PC-9 (cell line): ENCODE measurements at regions of chr15 and their contacts with region 1.

Region 1: DNA sequence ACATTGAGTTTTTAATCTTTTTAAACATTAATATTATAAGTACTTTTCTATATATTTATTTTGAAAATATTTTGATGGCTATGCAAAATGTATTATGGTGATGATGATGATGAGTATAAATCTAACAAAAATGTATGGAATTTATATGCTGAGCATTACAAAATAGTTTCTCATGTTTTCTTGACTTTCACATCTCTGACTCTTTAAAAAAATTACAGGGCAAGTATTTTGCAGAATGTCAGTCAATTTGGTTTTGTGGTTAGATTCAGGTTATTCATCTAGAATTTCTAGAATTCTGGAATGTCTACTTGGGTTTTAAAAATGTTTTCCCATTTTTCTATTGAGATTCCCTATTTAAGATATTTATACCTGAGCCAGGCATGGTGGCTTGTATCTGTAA is 41.7 kb upstream of the ANP32A start:
- DNase-seq: no peak
- H3K4me3 ChIP-seq: no peak overlapping the region
- H3K27ac ChIP-seq: no peak overlapping the region
- H3K4me1 ChIP-seq: no peaks in the 10 kb centered on the region
- H3K27me3 ChIP-seq: no peaks in the 10 kb centered on the region
- CTCF ChIP-seq: no peak

Region 2: DNA sequence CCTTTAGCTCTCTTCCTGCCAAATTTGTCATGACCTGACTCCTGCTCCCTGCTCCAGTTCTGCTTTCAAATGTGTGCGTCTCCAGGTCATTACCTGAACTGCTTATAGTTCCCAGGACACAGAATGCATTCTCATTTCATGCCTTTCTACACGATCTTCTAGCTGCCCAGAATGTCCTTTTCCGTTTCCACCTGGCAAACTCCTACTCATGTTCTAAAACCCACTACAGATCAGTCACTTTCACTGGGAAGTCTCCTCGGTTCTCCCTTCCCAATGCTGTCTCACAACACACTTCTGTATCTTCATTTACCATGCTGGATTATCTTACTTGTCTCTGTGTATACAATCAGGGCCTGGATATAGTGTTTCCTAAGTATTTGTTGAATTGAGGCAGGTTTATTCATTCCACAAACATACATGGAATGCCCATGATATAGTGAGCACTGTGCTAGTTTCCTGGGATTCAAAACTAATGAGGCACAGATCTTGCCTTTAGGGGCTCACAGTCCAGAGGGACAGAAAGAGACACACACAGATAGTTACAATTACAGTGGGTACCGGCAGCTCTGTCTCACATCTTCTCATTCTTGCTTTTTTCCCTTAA is 150.4 kb after region 1 on chr15:
- CTCF ChIA-PET with region 1: no interaction called
- POLR2A ChIA-PET with region 1: interaction called, 10 read pairs
- intact Hi-C with region 1: no loop called
- DNase-seq: no peak
- H3K4me3 ChIP-seq: no peak overlapping the region
- H3K27ac ChIP-seq: no peak overlapping the region
- H3K4me1 ChIP-seq: no peaks in the 10 kb centered on the region
- H3K27me3 ChIP-seq: no peaks in the 10 kb centered on the region
- CTCF ChIP-seq: no peak